ENCODE measurements at regions of chr12 and their contacts with region 1.

Region 1: DNA sequence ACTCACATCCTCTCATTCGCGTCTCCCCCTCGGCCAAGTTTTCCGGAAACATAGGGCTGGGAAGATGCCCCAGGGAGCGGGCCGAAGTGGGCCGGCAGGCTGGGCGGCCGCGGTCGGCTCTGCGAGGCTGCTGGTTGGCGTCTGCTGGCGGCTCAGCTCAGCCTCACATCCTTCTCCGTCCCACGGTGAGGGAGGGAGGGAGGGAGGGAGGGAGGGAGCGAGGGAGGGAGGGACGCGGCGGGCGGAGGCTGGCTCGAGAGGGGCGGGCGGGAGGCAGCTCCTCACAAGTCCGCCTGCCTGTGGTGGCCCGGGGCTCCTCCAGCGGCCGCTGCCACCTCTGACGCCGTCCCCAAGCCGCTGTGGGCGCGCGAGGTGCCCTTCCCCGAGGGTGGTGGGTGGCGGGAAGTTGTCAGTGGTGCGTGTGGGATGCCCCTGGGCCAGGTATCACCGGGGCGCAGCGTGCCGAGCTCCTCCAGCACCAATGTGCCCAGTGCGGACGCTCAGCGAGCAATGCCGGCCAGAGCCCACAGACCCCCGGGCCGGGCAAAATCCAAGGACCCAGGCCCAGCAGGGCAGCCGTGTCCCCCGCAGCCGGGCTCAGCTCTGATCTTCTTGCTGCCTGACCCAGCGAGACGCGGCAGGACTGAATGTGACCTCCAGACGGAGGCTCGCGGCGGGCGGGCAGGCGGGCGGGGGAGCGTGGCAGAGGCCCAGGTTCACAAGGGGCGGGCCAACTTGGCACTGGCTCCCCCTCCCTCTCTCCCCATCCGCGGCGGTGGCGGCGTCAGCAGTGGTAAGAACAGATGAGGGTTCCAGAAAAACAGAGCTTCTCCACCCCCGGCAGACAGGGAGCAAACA is 94.0 kb downstream of the RFLNA start:
- DNase-seq: peak; percentile 84 to 88
- ATAC-seq: peak; percentile 36 to 37
- H3K4me3 ChIP-seq: peak overlapping the region; percentile 56 to 86 (median 72)
- H3K27ac ChIP-seq: peak overlapping the region; percentile 93 to 98 (median 96)
- H3K4me1 ChIP-seq: peaks cover 75 to 80% of the 10 kb centered on the region in 2 donors
- H3K27me3 ChIP-seq: no peaks in the 10 kb centered on the region
- CTCF ChIP-seq: no peak
- POLR2A ChIP-seq: peak; percentile 80

Region 2: GRCh38 chr12:124369055-124369900 is 19.6 kb before region 1 on chr12:
- in situ Hi-C with region 1: no loop called
- intact Hi-C with region 1: loop called (anchors 1 kb)
- DNase-seq: peak; percentile 93 to 99
- ATAC-seq: peak; percentile 70 to 75
- H3K4me3 ChIP-seq: peak overlapping the region in 3 of 4 donors; percentile 30 to 41 (median 35)
- H3K27ac ChIP-seq: peak overlapping the region; percentile 93 to 98 (median 97)
- H3K4me1 ChIP-seq: peaks cover 75 to 83% of the 10 kb centered on the region in 2 donors
- H3K27me3 ChIP-seq: no peaks in the 10 kb centered on the region
- CTCF ChIP-seq: peak; percentile 58 to 82 (median 74)
- POLR2A ChIP-seq: peak; percentile 49 to 60

Region 3: DNA sequence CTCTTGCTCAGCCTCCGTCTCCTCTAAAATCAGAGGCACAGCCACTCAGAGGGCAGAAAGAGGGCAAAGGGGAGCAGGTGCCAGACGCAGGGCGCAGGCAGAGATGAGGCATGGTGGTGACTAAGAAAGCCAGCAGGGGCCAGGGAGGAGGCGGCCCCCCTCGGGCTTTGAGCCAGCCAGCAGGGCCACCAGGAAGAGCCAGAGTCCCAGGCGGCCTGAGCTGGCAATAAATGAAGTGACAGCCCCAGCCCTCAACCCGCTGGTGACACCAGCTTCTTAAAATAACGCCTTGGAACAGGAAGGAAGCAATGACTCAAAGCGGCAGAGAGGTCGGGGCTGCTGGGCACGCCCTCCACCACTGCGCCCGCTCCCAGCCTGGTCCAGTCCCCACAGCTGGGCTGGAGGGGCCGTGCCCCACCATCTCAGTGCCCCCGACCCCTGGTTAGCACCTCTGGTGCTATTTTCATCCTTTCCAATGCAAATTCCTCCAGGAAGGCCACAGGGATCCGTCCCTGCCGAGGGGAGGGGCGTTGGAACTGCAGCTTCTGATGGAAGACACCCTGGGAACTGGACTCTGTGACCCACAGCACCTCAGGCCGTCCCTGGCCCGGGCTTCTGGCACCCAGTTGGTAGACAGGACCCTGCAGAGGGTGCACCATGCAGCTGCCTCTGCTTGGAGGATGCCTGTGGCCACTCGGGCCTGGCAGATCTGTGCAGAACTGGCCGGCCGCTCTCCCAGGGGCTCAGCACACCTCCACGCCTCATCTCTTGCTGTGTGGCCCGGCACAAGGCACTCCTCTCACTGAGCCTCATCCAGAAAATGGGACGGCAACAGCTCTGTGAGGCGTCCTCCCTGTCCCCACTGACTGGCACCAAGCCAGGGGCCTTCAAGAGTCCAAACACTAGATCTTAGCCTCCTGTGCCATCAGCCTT is 64.8 kb after region 1 on chr12:
- in situ Hi-C with region 1: no loop called
- intact Hi-C with region 1: loop called (anchors 2 kb)
- DNase-seq: peak; percentile 91 to 96
- ATAC-seq: peak; percentile 73 to 79
- H3K4me3 ChIP-seq: peak overlapping the region; percentile 21 to 42 (median 32)
- H3K27ac ChIP-seq: peak overlapping the region; percentile 90 to 99 (median 93)
- H3K4me1 ChIP-seq: peaks cover 55 to 68% of the 10 kb centered on the region in 2 donors
- H3K27me3 ChIP-seq: no peaks in the 10 kb centered on the region
- CTCF ChIP-seq: peak in 2 of 5 experiments; percentile 8 to 22
- POLR2A ChIP-seq: peak; percentile 66 to 74

Region 4: GRCh38 chr12:124518051-124518932 is 129.4 kb after region 1 on chr12:
- in situ Hi-C with region 1: loop called in 1 of 4 experiments (anchors 25 kb)
- intact Hi-C with region 1: no loop called
- DNase-seq: peak; percentile 95 to 99
- ATAC-seq: peak; percentile 75 to 84
- H3K4me3 ChIP-seq: peak overlapping the region; percentile 53 to 59 (median 54)
- H3K27ac ChIP-seq: peak overlapping the region; percentile 90 to 99 (median 96)
- H3K4me1 ChIP-seq: peaks cover 83 to 94% of the 10 kb centered on the region in 2 donors
- H3K27me3 ChIP-seq: no peaks in the 10 kb centered on the region
- CTCF ChIP-seq: no peak
- POLR2A ChIP-seq: peak; percentile 45 to 65

Region 5: DNA sequence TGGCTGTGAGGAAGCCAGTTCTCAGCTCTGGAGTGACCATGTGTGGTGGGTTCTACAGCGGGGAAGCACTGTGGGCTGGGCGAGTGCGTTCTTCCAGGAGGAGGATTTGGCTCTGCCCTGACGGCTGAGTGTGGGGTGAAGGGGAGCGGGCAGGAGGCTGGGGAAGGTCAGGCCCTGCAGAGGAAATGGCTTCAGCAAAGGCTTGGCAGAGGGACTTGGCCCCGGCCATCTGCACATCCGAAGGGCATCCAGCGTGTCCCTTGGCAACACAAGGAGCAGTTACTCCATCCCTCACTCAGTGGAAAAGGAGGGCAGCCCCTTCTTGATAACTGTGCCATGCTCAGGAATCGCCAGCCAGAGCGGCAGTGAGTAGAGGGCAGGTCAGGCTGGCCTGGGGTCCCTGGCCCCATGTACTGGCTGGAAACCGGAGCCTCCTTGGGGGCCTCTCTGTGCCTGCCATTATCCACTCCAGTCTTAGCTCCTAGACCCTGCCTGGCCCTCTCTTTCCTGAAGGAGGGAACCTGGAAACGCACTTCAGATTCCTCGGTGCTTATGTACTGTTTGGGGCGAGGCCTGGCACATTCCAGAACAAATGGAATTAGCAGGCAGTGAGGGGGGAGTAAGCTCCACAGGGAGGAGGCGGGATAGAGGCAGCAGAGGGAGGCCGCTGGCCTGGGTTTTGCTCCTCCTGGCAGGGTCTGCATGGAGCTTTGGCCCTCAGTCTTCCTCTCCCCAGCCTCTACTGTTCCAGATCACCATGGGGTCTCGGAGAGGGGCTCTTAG is 312.1 kb after region 1 on chr12:
- in situ Hi-C with region 1: no loop called
- intact Hi-C with region 1: no loop called
- DNase-seq: no peak
- ATAC-seq: peak; percentile 22 to 32
- H3K4me3 ChIP-seq: no peak overlapping the region
- H3K27ac ChIP-seq: peak overlapping the region in 2 of 4 donors; percentile 33 to 43
- H3K4me1 ChIP-seq: peaks cover 4 to 9% of the 10 kb centered on the region in 2 donors
- H3K27me3 ChIP-seq: no peaks in the 10 kb centered on the region
- CTCF ChIP-seq: no peak
- POLR2A ChIP-seq: no peak

Region 6: DNA sequence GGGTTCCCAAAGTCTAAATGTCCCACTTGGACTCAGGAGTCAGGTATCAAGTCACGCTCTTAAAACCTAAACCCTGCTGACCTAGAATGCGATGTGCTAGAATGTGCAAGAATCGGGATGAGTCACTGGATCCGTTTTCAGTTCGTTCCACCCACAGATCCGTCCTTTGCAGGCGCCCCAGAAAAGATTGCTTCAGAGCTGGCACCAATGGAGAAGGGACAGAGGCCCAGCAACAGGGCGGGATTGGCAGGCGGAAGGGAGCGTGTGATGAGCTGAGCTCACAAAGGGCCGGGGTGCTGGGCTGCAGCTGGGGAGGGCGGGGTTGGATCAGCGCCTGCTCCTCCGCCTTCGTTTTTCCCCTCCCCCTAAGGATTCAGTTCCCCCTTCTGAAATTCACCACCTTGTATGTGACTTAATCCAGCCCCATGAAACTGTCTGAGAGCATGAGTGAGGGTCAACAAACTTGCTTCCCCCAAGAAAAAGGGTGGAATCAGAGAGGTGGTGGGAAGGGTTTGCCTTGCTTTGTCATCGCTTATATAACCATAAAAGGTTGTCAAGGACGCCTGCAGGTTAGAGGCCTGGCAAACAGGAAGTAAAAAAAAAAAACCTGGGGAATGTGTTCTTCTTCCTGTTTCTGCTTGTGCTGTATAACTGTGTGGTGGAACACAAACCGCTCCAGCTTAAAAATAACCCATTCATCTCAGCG is 528.4 kb after region 1 on chr12:
- in situ Hi-C with region 1: no loop called
- intact Hi-C with region 1: loop called (anchors 10 kb)
- DNase-seq: peak; percentile 99 to 100
- ATAC-seq: peak; percentile 60 to 64
- H3K4me3 ChIP-seq: peak overlapping the region; percentile 40 to 85 (median 64)
- H3K27ac ChIP-seq: peak overlapping the region; percentile 98 to 100 (median 98)
- H3K4me1 ChIP-seq: peaks cover 27 to 40% of the 10 kb centered on the region in 2 donors
- H3K27me3 ChIP-seq: no peaks in the 10 kb centered on the region
- CTCF ChIP-seq: peak in 1 of 5 experiments; percentile 29
- POLR2A ChIP-seq: peak; percentile 48 to 62